ENCODE measurements at regions of chr1 and their contacts with region 1.

Region 1: DNA sequence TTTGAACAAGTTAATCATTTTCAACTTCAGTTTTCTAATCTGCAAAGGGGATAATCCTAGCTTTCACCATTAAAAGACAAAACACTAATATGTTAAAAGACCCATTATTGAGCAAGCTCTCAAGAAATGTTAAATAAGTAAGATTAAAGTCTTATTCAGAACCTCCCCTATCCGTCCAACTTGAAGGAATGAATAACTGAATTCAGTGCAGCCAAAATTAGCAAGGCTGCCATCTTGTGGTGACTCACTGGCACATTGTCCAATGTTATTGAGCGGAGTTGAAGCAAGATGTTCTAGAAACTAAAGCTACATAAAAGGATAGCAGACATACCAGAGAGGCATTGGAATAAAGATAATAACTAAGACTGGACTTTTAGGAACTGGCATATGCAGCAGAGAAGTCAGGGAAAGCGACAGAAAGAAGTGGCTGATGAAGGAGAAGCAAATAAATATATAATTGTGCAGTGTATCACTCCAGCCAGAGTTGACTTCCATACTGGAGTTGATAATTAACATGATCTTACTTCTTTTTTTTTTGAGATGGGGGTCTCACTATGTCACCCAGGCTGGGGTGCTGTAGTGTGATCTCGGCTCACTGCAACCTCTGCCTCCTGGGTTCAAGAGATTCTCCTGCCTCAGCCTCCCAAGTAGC is 8.2 kb upstream of the CAP1 start:
- DNase-seq: peak; percentile 54
- H3K4me3 ChIP-seq: no peak overlapping the region
- H3K27ac ChIP-seq: no peak overlapping the region
- H3K4me1 ChIP-seq: peaks cover 15 to 17% of the 10 kb centered on the region in 2 experiments
- H3K27me3 ChIP-seq: no peaks in the 10 kb centered on the region
- CTCF ChIP-seq: peak; percentile 77
- EP300 ChIP-seq: no peak
- RAD21 ChIP-seq: peak; percentile 72

Region 2: GRCh38 chr1:39816415-39817090 is 215.8 kb before region 1 on chr1:
- CTCF ChIA-PET with region 1: interaction called, 13 read pairs
- POLR2A ChIA-PET with region 1: no interaction called
- DNase-seq: peak; percentile 86
- H3K4me3 ChIP-seq: no peak overlapping the region
- H3K27ac ChIP-seq: no peak overlapping the region
- H3K4me1 ChIP-seq: no peaks in the 10 kb centered on the region
- H3K27me3 ChIP-seq: peaks cover 5% of the 10 kb centered on the region; the same call in 1 of the 2 replicates
- CTCF ChIP-seq: peak; percentile 94
- EP300 ChIP-seq: no peak
- RAD21 ChIP-seq: peak; percentile 83

Region 3: GRCh38 chr1:39825432-39825951 is 206.9 kb before region 1 on chr1:
- CTCF ChIA-PET with region 1: interaction called, 10 read pairs
- POLR2A ChIA-PET with region 1: no interaction called
- DNase-seq: no peak
- H3K4me3 ChIP-seq: no peak overlapping the region
- H3K27ac ChIP-seq: no peak overlapping the region
- H3K4me1 ChIP-seq: peaks cover 8% of the 10 kb centered on the region in 2 experiments; a peak in 2 of 4 replicates
- H3K27me3 ChIP-seq: no peaks in the 10 kb centered on the region
- CTCF ChIP-seq: no peak
- EP300 ChIP-seq: no peak
- RAD21 ChIP-seq: no peak

Region 4: DNA sequence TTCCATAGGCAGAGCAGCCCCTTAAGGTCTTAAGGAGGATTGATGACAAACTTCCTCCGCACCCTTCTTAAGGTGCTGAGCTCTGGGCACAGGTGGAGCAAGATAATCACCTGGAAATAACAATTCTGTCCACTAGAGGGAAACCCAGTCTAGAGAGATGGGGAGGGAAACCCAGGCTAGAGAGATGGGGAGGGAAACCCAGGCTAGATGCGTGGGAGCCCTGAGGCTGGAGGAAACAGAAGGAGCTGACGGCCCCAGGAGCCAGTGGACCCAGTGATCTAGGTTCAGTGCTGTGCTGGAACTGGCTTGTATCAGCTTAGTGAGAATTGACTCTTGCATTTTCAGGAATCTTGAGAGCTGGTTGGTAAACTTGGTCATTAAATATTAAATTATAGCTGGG is 112.8 kb before region 1 on chr1:
- CTCF ChIA-PET with region 1: interaction called, 74 read pairs
- POLR2A ChIA-PET with region 1: no interaction called
- DNase-seq: peak; percentile 88
- H3K4me3 ChIP-seq: no peak overlapping the region
- H3K27ac ChIP-seq: no peak overlapping the region
- H3K4me1 ChIP-seq: no peaks in the 10 kb centered on the region
- H3K27me3 ChIP-seq: no peaks in the 10 kb centered on the region; the same call in none of the 2 replicates
- CTCF ChIP-seq: peak; percentile 67
- EP300 ChIP-seq: no peak
- RAD21 ChIP-seq: peak; percentile 85

Region 5: DNA sequence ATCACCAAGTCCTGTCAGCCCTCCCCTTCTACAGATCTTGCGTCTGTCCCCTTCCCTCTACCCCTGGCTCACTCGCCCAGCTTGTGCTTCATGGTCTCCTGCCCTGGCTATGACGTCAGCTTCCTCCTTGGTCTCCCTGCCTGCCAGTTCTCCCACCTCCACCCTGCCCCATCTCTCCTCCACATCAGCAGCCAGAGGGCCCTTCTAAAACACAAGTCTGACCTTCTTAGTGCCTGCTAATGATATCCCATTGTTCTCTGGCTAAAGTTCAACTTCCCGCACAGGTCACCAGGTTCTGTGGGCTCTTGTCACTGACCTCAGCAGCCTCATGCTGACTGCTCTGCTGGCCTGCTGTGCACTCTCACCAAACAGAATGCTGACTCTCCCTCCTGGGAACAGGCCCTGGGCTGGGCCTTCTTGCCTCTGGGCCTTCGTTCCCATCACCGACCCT is 106.0 kb before region 1 on chr1:
- CTCF ChIA-PET with region 1: interaction called, 74 read pairs
- POLR2A ChIA-PET with region 1: no interaction called
- DNase-seq: no peak
- H3K4me3 ChIP-seq: no peak overlapping the region
- H3K27ac ChIP-seq: no peak overlapping the region
- H3K4me1 ChIP-seq: peaks cover 0 to 3% of the 10 kb centered on the region in 2 experiments; a peak in 1 of 4 replicates
- H3K27me3 ChIP-seq: no peaks in the 10 kb centered on the region
- CTCF ChIP-seq: no peak
- EP300 ChIP-seq: no peak
- RAD21 ChIP-seq: no peak

Region 6: GRCh38 chr1:40014812-40015594 is 17.4 kb before region 1 on chr1:
- CTCF ChIA-PET with region 1: interaction called, 18 read pairs
- POLR2A ChIA-PET with region 1: no interaction called
- DNase-seq: no peak
- H3K4me3 ChIP-seq: no peak overlapping the region
- H3K27ac ChIP-seq: peak overlapping the region in 1 of 2 experiments; percentile 72; a peak in 2 of 4 replicates
- H3K4me1 ChIP-seq: peaks cover 0 to 9% of the 10 kb centered on the region in 2 experiments; a peak in 1 of 4 replicates
- H3K27me3 ChIP-seq: no peaks in the 10 kb centered on the region
- CTCF ChIP-seq: no peak
- EP300 ChIP-seq: peak in 1 of 2 experiments; percentile 37; a peak in 1 of 4 replicates
- RAD21 ChIP-seq: no peak

Region 7: GRCh38 chr1:40049725-40050124 is 17.4 kb after region 1 on chr1:
- CTCF ChIA-PET with region 1: interaction called, 10 read pairs
- POLR2A ChIA-PET with region 1: no interaction called
- DNase-seq: no peak
- H3K4me3 ChIP-seq: no peak overlapping the region
- H3K27ac ChIP-seq: no peak overlapping the region
- H3K4me1 ChIP-seq: peaks cover 0 to 6% of the 10 kb centered on the region in 2 experiments; a peak in 1 of 4 replicates
- H3K27me3 ChIP-seq: no peaks in the 10 kb centered on the region
- CTCF ChIP-seq: no peak
- EP300 ChIP-seq: no peak
- RAD21 ChIP-seq: no peak

Region 8: DNA sequence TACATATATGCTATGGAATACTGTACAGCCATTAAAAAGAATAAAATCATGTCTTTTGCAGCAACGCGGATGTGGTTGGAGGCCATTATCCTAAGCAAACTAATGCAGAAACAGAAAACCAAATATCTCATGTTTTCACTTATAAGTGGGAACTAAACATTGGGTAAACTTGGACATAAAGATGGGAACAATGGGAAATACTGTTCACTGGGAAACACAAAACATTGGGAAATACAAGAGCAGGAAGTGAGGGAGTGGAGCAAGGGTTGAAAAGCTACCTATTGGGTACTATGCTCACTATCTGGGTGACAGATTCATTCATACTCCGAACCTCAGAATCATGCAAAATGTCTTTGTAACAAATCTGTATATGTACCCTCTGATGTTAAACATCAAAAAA is 82.0 kb after region 1 on chr1:
- CTCF ChIA-PET with region 1: no interaction called
- POLR2A ChIA-PET with region 1: no interaction called
- DNase-seq: no peak
- H3K4me3 ChIP-seq: no peak overlapping the region
- H3K27ac ChIP-seq: no peak overlapping the region
- H3K4me1 ChIP-seq: no peaks in the 10 kb centered on the region
- H3K27me3 ChIP-seq: peaks cover 22% of the 10 kb centered on the region; the same call in 1 of the 2 replicates
- CTCF ChIP-seq: no peak
- EP300 ChIP-seq: no peak
- RAD21 ChIP-seq: no peak

Region 9: GRCh38 chr1:40291293-40291692 is 258.9 kb after region 1 on chr1:
- CTCF ChIA-PET with region 1: no interaction called
- POLR2A ChIA-PET with region 1: no interaction called
- DNase-seq: no peak
- H3K4me3 ChIP-seq: no peak overlapping the region
- H3K27ac ChIP-seq: no peak overlapping the region
- H3K4me1 ChIP-seq: no peaks in the 10 kb centered on the region
- H3K27me3 ChIP-seq: no peaks in the 10 kb centered on the region
- CTCF ChIP-seq: no peak
- EP300 ChIP-seq: no peak
- RAD21 ChIP-seq: no peak

Measured in SK-N-SH (cell line).